CD4-positive, alpha-beta T cell (primary cell): ENCODE measurements at regions of chr12 and their contacts with region 1.

Region 1: DNA sequence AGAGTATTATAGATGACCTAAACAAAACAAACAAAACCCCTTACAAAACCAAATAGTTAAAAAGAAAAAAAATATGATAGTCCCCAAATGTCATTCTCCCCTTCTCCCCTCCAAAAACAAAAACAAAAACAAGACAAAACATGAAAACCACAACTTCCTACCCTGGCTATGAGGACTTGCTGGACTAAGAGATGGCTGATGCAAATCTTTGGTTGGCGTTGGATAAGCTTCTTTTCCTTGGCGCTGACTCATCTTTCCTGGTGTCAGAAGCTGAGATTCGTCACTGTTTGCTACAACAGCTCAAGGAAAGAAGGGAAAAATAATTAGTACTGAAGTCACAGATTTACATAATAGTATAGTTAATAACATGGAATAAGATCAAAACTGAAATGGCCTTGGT is 102.5 kb upstream of the BBS10 start:
- DNase-seq: peak in 2 of 14 experiments; percentile 31 to 46
- ATAC-seq: no peak
- H3K4me3 ChIP-seq: no peak overlapping the region
- H3K4me3 Mint-ChIP-seq: no peak overlapping the region
- H3K27ac ChIP-seq: no peak overlapping the region
- H3K27ac Mint-ChIP-seq: no peak overlapping the region
- H3K4me1 ChIP-seq: no peaks in the 10 kb centered on the region
- H3K4me1 Mint-ChIP-seq: peaks cover 49% of the 10 kb centered on the region
- H3K27me3 ChIP-seq: no peaks in the 10 kb centered on the region
- H3K27me3 Mint-ChIP-seq: no peaks in the 10 kb centered on the region
- CTCF ChIP-seq: no peak

Region 2: DNA sequence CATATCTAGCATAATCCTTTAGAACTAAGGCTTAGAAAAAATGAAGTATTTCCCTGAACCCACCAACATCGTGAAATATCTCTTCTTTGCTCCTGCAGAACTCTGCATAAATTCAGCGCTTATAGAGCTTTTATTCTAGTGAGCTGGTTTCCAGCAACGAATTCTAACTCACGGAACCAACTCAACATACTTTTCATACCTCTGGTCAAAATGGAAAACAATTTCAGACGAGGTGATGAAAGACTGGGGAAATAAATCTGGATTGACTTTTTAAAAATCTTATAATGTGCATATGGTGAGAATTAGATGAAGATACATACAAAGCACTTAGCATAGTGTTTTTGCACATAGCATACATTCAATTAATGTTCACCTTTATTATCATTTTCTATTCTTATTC is 39.9 kb before region 1 on chr12:
- CTCF ChIA-PET with region 1: no interaction called
- POLR2A ChIA-PET with region 1: no interaction called
- intact Hi-C with region 1: loop called in 1 of 2 experiments (anchors 5 kb)
- DNase-seq: no peak
- ATAC-seq: no peak
- H3K4me3 ChIP-seq: no peak overlapping the region
- H3K4me3 Mint-ChIP-seq: no peak overlapping the region
- H3K27ac ChIP-seq: no peak overlapping the region
- H3K27ac Mint-ChIP-seq: peak overlapping the region; percentile 53
- H3K4me1 ChIP-seq: no peaks in the 10 kb centered on the region
- H3K4me1 Mint-ChIP-seq: peaks cover 24% of the 10 kb centered on the region
- H3K27me3 ChIP-seq: no peaks in the 10 kb centered on the region
- H3K27me3 Mint-ChIP-seq: no peaks in the 10 kb centered on the region
- CTCF ChIP-seq: no peak